CD4-positive, alpha-beta memory T cell (primary cell): ENCODE measurements at regions of chr20 and their contacts with region 1.

Region 1: GRCh38 chr20:37192137-37192854 is 12.9 kb upstream of the MROH8 start:
- DNase-seq: peak; percentile 54 to 72 (median 63)
- H3K4me3 ChIP-seq: no peak overlapping the region
- H3K4me3 Mint-ChIP-seq: peak overlapping the region in 3 of 8 donors; percentile 4 to 57 (median 17)
- H3K27ac ChIP-seq: no peak overlapping the region
- H3K27ac Mint-ChIP-seq: peak overlapping the region in 6 of 7 donors; percentile 16 to 81 (median 28)
- H3K4me1 ChIP-seq: peaks cover 74% of the 10 kb centered on the region
- H3K4me1 Mint-ChIP-seq: peaks cover 58 to 78% (median 69%) of the 10 kb centered on the region in 4 donors
- H3K27me3 ChIP-seq: no peaks in the 10 kb centered on the region
- H3K27me3 Mint-ChIP-seq: no peaks in the 10 kb centered on the region

Region 2: DNA sequence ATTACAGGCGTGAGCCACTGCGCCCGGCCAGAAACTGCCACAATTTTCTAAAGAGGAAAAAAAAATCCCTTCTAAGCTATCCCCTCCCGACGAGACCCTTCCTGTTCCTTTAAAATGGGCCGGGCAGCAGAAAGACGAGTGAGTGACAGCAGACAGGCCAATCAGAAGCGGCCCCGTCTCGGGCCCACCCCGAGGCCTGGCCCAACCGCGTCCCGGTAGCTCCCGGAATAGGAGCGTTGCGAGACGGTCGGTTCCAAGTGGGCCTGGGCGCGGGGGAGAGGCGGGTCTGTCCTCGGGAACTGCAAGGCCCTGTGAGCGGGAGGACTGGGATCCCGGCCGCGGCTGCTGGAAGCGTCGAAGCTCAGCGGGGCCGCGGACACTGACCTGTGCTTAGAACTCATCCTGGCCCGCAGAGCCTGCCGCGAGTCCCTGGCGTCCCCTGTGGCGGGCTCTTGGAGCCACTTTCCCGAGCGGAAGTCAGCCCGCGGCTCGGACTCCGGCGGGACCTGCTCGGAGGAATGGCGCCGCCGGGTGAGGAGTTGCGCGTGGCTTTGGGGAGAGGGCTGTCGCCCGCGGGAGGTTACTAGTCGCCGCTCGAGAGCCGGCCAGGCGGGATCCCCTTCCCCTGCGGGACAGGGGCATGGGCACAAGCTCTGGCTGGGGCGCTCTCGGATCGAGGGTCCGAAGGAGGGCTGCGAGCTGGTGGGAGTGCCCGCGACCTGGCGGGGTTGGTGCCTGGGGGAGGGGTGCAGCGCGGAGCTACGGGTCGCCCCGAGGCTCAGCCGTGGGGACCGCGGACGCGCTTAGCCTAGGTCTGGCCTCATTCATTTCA is 13.2 kb before region 1 on chr20 and contains the starts of genes MROH8 and RPN2:
- CTCF ChIA-PET with region 1: interaction called, 99 read pairs
- POLR2A ChIA-PET with region 1: interaction called, 62 read pairs
- intact Hi-C with region 1: loop called (anchors 1 kb)
- DNase-seq: peak; percentile 92 to 96 (median 93)
- H3K4me3 ChIP-seq: peak within 1 kb of the TSS; percentile 96 to 97
- H3K4me3 Mint-ChIP-seq: peak within 1 kb of the TSS; percentile 92 to 99 (median 98)
- H3K27ac ChIP-seq: peak within 1 kb of the TSS; percentile 92
- H3K27ac Mint-ChIP-seq: peak within 1 kb of the TSS; percentile 96 to 98 (median 98)
- H3K4me1 ChIP-seq: peaks cover 46% of the 10 kb centered on the region
- H3K4me1 Mint-ChIP-seq: peaks cover 29 to 58% (median 43%) of the 10 kb centered on the region in 4 donors
- H3K27me3 ChIP-seq: no peaks in the 10 kb centered on the region
- H3K27me3 Mint-ChIP-seq: peaks cover 0 to 2% of the 10 kb centered on the region in 2 donors
- total RNA-seq, gene MROH8: 1.4 to 1.5 TPM
- total RNA-seq, gene RPN2: 125 to 127 TPM

Region 3: DNA sequence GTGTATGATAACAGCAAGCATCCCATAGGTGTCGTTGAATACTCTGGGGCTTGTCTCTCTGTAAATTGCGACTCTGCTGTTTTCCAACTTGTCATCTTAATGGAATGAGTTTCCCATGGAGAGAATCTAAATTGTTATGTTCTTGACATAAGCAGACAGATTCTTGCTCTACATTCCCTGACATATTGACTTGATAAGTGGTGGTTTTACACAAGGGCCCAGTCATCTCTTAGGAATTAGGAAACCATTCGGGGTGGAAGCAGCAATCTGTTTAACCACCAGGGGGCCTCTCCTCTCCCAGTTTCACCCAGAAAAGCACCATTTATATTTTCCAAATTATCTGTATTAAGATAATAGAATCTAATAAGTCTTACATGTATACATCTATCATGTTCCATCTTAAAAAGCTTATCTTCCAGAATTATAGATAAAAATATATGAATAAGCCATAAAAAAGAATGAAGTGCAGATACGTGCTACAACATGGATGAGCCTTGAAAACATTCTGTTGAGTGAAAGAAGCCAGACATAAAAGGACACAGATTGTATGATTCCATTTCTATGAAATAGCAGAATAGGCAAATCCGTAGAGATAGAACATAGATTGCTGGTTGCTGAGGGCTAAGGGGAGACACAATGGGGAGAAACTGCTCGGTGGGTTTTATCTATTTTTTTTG is 10.1 kb after region 1 on chr20:
- CTCF ChIA-PET with region 1: interaction called, 17 read pairs
- POLR2A ChIA-PET with region 1: no interaction called
- intact Hi-C with region 1: no loop called
- DNase-seq: peak in 2 of 5 donors; percentile 19 to 26
- H3K4me3 ChIP-seq: no peak overlapping the region
- H3K4me3 Mint-ChIP-seq: no peak overlapping the region
- H3K27ac ChIP-seq: no peak overlapping the region
- H3K27ac Mint-ChIP-seq: peak overlapping the region in 2 of 7 donors; percentile 9 to 64
- H3K4me1 ChIP-seq: no peaks in the 10 kb centered on the region
- H3K4me1 Mint-ChIP-seq: peaks cover 4 to 19% (median 8%) of the 10 kb centered on the region in 4 donors
- H3K27me3 ChIP-seq: no peaks in the 10 kb centered on the region
- H3K27me3 Mint-ChIP-seq: no peaks in the 10 kb centered on the region

Region 4: GRCh38 chr20:37220731-37221130 is 28.4 kb after region 1 on chr20:
- CTCF ChIA-PET with region 1: interaction called, 11 read pairs
- POLR2A ChIA-PET with region 1: no interaction called
- intact Hi-C with region 1: no loop called
- DNase-seq: no peak
- H3K4me3 ChIP-seq: no peak overlapping the region
- H3K4me3 Mint-ChIP-seq: no peak overlapping the region
- H3K27ac ChIP-seq: no peak overlapping the region
- H3K27ac Mint-ChIP-seq: no peak overlapping the region
- H3K4me1 ChIP-seq: no peaks in the 10 kb centered on the region
- H3K4me1 Mint-ChIP-seq: peaks cover 0 to 1% (median 0%) of the 10 kb centered on the region in 4 donors
- H3K27me3 ChIP-seq: no peaks in the 10 kb centered on the region
- H3K27me3 Mint-ChIP-seq: no peaks in the 10 kb centered on the region

Region 5: DNA sequence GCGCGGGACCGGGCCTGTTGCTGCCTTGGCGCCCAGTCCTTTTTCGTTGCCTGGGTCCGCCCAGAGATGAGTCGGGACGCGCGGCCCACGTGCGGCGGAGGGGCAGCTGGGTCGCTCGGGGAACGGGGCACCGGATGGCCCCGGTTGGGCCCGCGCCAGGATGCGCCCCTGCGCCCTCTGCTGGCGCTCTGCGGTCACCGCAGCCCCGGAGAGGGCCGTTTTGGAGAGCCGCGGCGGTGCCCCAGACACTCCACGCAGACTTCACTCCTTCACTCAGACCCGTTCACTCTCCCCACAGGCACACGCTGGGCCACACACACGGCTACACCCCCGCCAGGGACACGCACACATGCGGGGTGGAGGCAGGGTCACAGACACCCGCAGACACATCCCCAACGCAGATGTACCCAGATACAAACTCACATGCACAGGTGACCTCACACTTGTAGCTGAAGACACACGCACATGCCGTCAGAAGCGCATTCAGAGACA is 192.4 kb after region 1 on chr20:
- CTCF ChIA-PET with region 1: interaction called, 15 read pairs
- POLR2A ChIA-PET with region 1: interaction called, 3 read pairs
- intact Hi-C with region 1: loop called (anchors 1 kb)
- DNase-seq: peak; percentile 51 to 83 (median 75)
- H3K4me3 ChIP-seq: peak overlapping the region in 1 of 2 donors; percentile 45
- H3K4me3 Mint-ChIP-seq: peak overlapping the region; percentile 79 to 92 (median 88)
- H3K27ac ChIP-seq: no peak overlapping the region
- H3K27ac Mint-ChIP-seq: peak overlapping the region in 6 of 7 donors; percentile 77 to 91 (median 86)
- H3K4me1 ChIP-seq: peaks cover 4% of the 10 kb centered on the region
- H3K4me1 Mint-ChIP-seq: peaks cover 4 to 7% (median 6%) of the 10 kb centered on the region in 4 donors
- H3K27me3 ChIP-seq: no peaks in the 10 kb centered on the region
- H3K27me3 Mint-ChIP-seq: no peaks in the 10 kb centered on the region

Region 6: GRCh38 chr20:37417617-37418467 is 225.5 kb after region 1 on chr20:
- CTCF ChIA-PET with region 1: no interaction called
- POLR2A ChIA-PET with region 1: no interaction called
- intact Hi-C with region 1: no loop called
- DNase-seq: no peak
- H3K4me3 ChIP-seq: no peak overlapping the region
- H3K4me3 Mint-ChIP-seq: no peak overlapping the region
- H3K27ac ChIP-seq: no peak overlapping the region
- H3K27ac Mint-ChIP-seq: no peak overlapping the region
- H3K4me1 ChIP-seq: no peaks in the 10 kb centered on the region
- H3K4me1 Mint-ChIP-seq: peaks cover 0 to 4% (median 0%) of the 10 kb centered on the region in 4 donors
- H3K27me3 ChIP-seq: no peaks in the 10 kb centered on the region
- H3K27me3 Mint-ChIP-seq: peaks cover 13 to 20% of the 10 kb centered on the region in 2 donors

Region 7: DNA sequence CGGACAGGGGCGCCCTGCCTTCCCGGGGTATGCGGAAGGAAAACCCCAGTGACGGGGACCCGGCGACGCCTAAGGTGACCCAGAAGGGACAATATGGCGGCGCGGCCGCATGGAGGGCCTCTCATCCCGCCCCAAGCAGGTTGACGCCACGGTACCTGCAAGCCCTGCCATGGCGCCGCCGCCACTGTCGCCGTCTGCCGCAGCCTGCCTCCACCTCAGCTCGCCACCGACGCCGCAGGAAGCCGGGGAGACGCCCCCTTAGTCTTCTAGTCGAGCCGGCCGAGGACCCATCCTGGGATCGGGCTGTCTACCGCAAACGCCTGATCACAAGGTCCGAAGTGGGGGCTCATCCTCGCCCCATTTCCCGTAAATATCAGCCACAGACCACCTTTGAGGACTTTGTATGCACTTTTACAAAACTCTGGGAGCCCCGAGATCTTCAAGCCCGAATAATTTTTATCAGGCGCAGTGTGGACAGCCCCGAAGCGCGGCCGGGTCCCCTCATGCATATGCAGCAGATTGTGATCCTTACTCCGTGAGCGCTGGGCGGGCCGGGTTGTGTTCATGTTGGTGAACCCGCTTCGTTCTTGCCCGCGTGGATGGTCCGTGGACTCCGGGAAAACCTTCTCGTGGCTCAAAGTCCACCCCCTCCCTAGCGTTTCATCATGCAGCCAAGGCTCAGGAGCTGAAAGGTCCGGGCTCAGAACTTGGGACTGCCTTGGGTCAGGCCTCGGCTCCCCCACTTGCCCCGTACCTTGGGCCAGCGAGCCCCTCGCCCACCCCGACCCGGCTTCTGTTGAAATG is 335.5 kb after region 1 on chr20 and contains the start of gene BLCAP:
- CTCF ChIA-PET with region 1: interaction called, 180 read pairs
- POLR2A ChIA-PET with region 1: interaction called, 3 read pairs
- intact Hi-C with region 1: no loop called
- DNase-seq: peak; percentile 96 to 97 (median 96)
- H3K4me3 ChIP-seq: peak within 1 kb of the TSS; percentile 90 to 100
- H3K4me3 Mint-ChIP-seq: peak within 1 kb of the TSS; percentile 86 to 96 (median 90)
- H3K27ac ChIP-seq: peak within 1 kb of the TSS; percentile 99
- H3K27ac Mint-ChIP-seq: peak within 1 kb of the TSS; percentile 98 to 100 (median 99)
- H3K4me1 ChIP-seq: peaks cover 37% of the 10 kb centered on the region
- H3K4me1 Mint-ChIP-seq: peaks cover 32 to 60% (median 47%) of the 10 kb centered on the region in 4 donors
- H3K27me3 ChIP-seq: no peaks in the 10 kb centered on the region
- H3K27me3 Mint-ChIP-seq: no peaks in the 10 kb centered on the region
- total RNA-seq, gene BLCAP: 81.7 to 87.5 TPM

Region 8: DNA sequence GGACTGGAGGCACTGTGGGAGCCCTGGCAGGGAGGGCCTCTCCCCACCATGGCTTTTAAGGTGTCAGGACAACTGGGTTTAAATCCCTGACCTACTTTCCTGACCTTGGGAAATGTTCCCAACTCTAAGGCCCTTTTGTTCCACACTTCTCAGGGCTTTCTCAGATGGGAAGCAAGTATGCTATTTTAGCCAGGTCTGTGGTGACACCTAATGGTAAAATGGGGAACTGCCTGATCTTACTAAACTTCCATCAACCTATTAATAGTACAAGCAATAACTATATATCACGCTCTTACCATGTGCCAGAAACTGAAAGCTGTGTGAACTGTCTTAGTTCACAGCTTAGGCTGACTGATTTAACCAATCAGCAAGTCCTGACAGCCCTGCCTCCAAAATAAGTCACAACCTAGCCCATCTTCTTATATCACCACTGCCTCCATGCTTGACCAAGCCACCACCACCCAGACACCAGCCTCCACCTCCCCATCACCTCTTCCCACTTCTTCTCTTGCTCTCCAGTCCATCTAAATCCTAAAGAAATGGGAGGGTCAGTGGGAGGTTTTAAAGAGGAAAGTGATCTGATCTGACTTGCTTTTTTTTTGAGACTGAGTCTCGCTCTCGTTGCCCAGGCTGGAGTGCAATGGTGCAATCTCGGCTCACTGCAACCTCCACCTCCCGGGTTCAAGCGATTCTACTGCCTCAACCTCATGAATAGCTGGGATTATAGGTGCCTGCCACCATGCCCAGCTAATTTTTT is 342.3 kb after region 1 on chr20:
- CTCF ChIA-PET with region 1: interaction called, 180 read pairs
- POLR2A ChIA-PET with region 1: interaction called, 5 read pairs
- intact Hi-C with region 1: loop called (anchors 1 kb)
- DNase-seq: peak; percentile 51 to 69 (median 67)
- H3K4me3 ChIP-seq: no peak overlapping the region
- H3K4me3 Mint-ChIP-seq: peak overlapping the region in 2 of 8 donors; percentile 28 to 46
- H3K27ac ChIP-seq: no peak overlapping the region
- H3K27ac Mint-ChIP-seq: peak overlapping the region in 2 of 7 donors; percentile 31 to 57
- H3K4me1 ChIP-seq: no peaks in the 10 kb centered on the region
- H3K4me1 Mint-ChIP-seq: peaks cover 0 to 5% (median 3%) of the 10 kb centered on the region in 4 donors
- H3K27me3 ChIP-seq: no peaks in the 10 kb centered on the region
- H3K27me3 Mint-ChIP-seq: peaks cover 5 to 12% of the 10 kb centered on the region in 2 donors